ENCODE measurements at regions of chrX and their contacts with region 1.

Region 1: DNA sequence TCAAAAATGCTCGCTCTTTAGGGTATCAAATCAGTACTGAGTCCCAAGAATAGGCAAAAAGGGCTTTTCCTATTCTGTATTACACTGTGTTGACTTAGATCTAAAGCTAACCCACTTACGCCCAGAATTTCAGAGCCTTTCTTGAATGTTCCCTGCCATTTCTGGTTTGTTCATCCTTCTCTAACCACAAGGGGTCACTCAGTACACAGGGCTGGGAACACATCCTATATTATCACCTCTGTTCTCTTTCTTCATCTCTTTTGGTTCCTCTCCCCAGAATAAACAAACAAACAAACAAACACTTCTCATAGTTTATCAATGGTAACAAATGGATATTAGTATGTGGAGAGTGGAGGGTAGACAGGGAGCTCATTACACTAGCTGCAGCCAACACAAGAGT is 25.5 kb upstream of the MORC4 start:
- DNase-seq: peak; percentile 27
- ATAC-seq: peak; percentile 81
- H3K4me3 ChIP-seq: no peak overlapping the region
- H3K27ac ChIP-seq: no peak overlapping the region
- H3K4me1 ChIP-seq: no peaks in the 10 kb centered on the region
- H3K27me3 ChIP-seq: no peaks in the 10 kb centered on the region
- CTCF ChIP-seq: peak; percentile 54 to 69 (median 63); a peak in 5 of 6 replicates
- POLR2A ChIP-seq: no peak
- RAD21 ChIP-seq: peak; percentile 83

Region 2: DNA sequence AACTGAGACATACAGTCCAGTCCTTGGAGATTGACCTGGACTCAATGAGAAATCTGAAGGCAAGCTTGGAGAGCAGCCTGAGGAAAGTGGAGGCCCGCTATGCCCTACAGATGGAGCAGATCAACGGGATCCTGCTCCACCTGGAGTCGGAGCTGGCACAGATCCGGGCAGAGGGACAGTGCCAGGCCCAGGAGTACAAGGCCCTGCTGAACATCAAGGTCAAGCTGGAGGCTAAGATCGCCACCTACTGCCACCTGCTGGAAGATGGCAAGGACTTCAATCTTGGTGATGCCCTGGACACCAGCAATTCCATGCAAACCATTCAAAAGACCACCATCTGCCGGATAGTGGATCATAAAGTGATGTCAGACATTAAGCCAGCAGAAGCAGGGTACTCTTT is 403.5 kb after region 1 on chrX:
- CTCF ChIA-PET with region 1: interaction called, 3 read pairs
- POLR2A ChIA-PET with region 1: no interaction called
- RAD21 ChIA-PET with region 1: no interaction called
- intact Hi-C with region 1: loop called (anchors 1 kb)
- DNase-seq: no peak
- ATAC-seq: no peak; the same call in 1 of the 2 replicates
- H3K4me3 ChIP-seq: no peak overlapping the region
- H3K27ac ChIP-seq: no peak overlapping the region
- H3K4me1 ChIP-seq: no peaks in the 10 kb centered on the region
- H3K27me3 ChIP-seq: no peaks in the 10 kb centered on the region
- CTCF ChIP-seq: peak; percentile 39 to 44 (median 43); a peak in 5 of 6 replicates
- POLR2A ChIP-seq: no peak
- RAD21 ChIP-seq: peak; percentile 50

Region 3: DNA sequence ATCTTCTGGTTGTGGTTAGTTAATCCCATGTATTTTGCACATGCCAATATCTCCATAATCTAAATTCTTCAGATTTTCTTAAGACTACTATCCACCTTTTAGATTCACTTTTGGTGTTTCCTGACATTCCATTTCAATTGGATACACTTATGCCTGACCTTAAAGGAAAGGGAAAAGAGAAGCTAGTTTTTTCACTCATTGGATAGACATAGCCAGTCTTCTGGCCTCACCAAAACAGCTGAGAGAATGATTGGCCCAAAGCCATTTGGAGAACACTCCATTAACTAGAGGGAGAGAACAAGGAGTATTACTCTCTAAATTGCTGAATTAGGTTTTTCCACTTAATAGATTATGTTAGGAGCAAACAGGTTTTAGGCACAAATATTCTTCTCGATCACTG is 606.8 kb after region 1 on chrX:
- CTCF ChIA-PET with region 1: no interaction called
- POLR2A ChIA-PET with region 1: no interaction called
- RAD21 ChIA-PET with region 1: no interaction called
- intact Hi-C with region 1: loop called (anchors 10 kb)
- DNase-seq: no peak
- ATAC-seq: no peak
- H3K4me3 ChIP-seq: no peak overlapping the region
- H3K27ac ChIP-seq: no peak overlapping the region
- H3K4me1 ChIP-seq: peaks cover 7 to 13% of the 10 kb centered on the region in 2 experiments
- H3K27me3 ChIP-seq: no peaks in the 10 kb centered on the region
- CTCF ChIP-seq: no peak
- POLR2A ChIP-seq: no peak
- RAD21 ChIP-seq: no peak